T-cell (primary cell): ENCODE measurements at regions of chr6 and their contacts with region 1.

Region 1: DNA sequence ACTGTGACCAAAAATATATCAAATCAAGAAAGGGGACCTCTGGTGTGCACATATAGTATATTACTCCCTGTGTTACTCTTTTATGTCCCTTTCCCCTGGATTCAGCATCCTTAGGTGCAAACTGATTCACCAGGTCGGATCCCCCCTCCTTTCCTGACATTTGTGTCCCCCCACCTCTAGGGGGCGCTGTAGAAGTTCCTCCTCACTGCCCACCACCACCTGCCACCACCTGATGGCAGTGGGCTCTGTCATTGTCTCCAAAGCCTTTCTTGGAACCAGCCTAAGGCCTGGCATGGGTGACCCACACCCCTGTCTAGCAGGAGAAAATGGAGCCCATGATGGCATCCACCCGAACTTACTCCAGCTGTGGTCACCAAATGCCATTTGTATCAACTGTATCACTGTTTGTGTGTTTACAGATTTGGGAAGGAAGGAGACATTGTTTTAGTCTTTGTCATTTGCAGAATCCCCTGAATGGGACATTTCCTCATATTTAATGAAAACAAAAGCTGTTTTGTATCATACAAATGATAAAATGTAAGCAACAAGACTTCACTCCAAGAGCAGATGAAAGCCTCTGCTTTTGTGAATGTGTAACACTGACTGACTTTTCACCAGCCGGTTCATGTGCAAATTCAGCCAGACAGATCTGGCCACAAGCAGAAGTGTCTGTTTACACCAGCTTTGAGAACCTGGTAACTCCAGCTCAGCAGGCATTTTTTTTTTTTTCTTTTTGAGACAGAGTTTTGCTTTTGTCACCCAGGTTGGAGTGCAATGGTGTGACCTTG is 66.2 kb downstream of the ARMC2 start:
- DNase-seq: peak in 30 of 35 experiments; percentile 2 to 67 (median 28)
- ATAC-seq: peak in 1 of 4 experiments; percentile 40
- H3K4me3 ChIP-seq: no peak overlapping the region
- H3K4me3 Mint-ChIP-seq: no peak overlapping the region
- H3K27ac ChIP-seq: no peak overlapping the region
- H3K27ac Mint-ChIP-seq: no peak overlapping the region
- H3K4me1 ChIP-seq: peaks cover 0 to 3% of the 10 kb centered on the region in 2 experiments
- H3K4me1 Mint-ChIP-seq: peaks cover 0 to 11% (median 4%) of the 10 kb centered on the region in 3 donors
- H3K27me3 ChIP-seq: no peaks in the 10 kb centered on the region
- H3K27me3 Mint-ChIP-seq: no peaks in the 10 kb centered on the region

Region 2: GRCh38 chr6:108684701-108685329 is 229.6 kb before region 1 on chr6:
- CTCF ChIA-PET with region 1: no interaction called
- POLR2A ChIA-PET with region 1: no interaction called
- DNase-seq: peak in 1 of 35 experiments; percentile 9
- ATAC-seq: no peak
- H3K4me3 ChIP-seq: no peak overlapping the region
- H3K4me3 Mint-ChIP-seq: no peak overlapping the region
- H3K27ac ChIP-seq: no peak overlapping the region
- H3K27ac Mint-ChIP-seq: no peak overlapping the region
- H3K4me1 ChIP-seq: peaks cover 4 to 6% of the 10 kb centered on the region in 2 experiments
- H3K4me1 Mint-ChIP-seq: peaks cover 6 to 9% (median 8%) of the 10 kb centered on the region in 3 donors
- H3K27me3 ChIP-seq: no peaks in the 10 kb centered on the region
- H3K27me3 Mint-ChIP-seq: no peaks in the 10 kb centered on the region

Region 3: GRCh38 chr6:108877046-108877751 is 37.2 kb before region 1 on chr6:
- CTCF ChIA-PET with region 1: interaction called in 1 of 2 experiments, 6 read pairs
- POLR2A ChIA-PET with region 1: interaction called in 1 of 2 experiments, 12 read pairs
- DNase-seq: no peak
- ATAC-seq: no peak
- H3K4me3 ChIP-seq: no peak overlapping the region
- H3K4me3 Mint-ChIP-seq: no peak overlapping the region
- H3K27ac ChIP-seq: no peak overlapping the region
- H3K27ac Mint-ChIP-seq: no peak overlapping the region
- H3K4me1 ChIP-seq: peaks cover 4 to 29% of the 10 kb centered on the region in 2 experiments
- H3K4me1 Mint-ChIP-seq: peaks cover 35 to 42% (median 37%) of the 10 kb centered on the region in 3 donors
- H3K27me3 ChIP-seq: no peaks in the 10 kb centered on the region
- H3K27me3 Mint-ChIP-seq: no peaks in the 10 kb centered on the region

Region 4: DNA sequence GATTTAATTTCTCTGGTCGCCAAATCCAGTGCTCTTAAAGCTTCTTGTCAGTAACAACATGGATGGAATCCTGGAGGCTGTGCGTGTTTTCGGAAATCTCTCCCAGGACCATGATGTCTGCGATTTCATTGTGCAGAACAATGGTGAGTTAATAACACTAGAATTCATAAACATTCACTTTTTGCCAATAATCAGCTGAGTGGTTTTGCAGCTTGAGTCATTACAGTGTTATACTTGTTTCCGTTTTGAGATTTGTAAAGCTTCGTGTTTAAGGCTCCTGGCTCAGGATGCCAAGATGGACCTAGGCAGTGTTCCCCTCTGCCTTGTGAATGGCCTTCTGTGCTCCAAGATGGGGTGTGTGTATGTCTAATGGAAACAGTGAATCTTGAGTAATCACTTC is 47.6 kb after region 1 on chr6:
- CTCF ChIA-PET with region 1: no interaction called
- POLR2A ChIA-PET with region 1: no interaction called
- DNase-seq: no peak
- ATAC-seq: no peak
- H3K4me3 ChIP-seq: no peak overlapping the region
- H3K4me3 Mint-ChIP-seq: no peak overlapping the region
- H3K27ac ChIP-seq: no peak overlapping the region
- H3K27ac Mint-ChIP-seq: no peak overlapping the region
- H3K4me1 ChIP-seq: peaks cover 0 to 12% of the 10 kb centered on the region in 2 experiments
- H3K4me1 Mint-ChIP-seq: peaks cover 9 to 22% (median 14%) of the 10 kb centered on the region in 3 donors
- H3K27me3 ChIP-seq: no peaks in the 10 kb centered on the region
- H3K27me3 Mint-ChIP-seq: no peaks in the 10 kb centered on the region